Activated CD4-positive, alpha-beta T cell treated with anti-CD3 and anti-CD28 coated beads for 36 hours (primary cell): ENCODE measurements at regions of chr2 and their contacts with region 1.

Region 1: GRCh38 chr2:88307817-88308216 is 137.7 kb downstream of the THNSL2 start:
- DNase-seq: peak; percentile 38
- ATAC-seq: no peak
- H3K4me3 Mint-ChIP-seq: no peak overlapping the region
- H3K27ac Mint-ChIP-seq: no peak overlapping the region
- H3K4me1 Mint-ChIP-seq: no peaks in the 10 kb centered on the region
- H3K27me3 Mint-ChIP-seq: peaks cover 14% of the 10 kb centered on the region

Region 2: DNA sequence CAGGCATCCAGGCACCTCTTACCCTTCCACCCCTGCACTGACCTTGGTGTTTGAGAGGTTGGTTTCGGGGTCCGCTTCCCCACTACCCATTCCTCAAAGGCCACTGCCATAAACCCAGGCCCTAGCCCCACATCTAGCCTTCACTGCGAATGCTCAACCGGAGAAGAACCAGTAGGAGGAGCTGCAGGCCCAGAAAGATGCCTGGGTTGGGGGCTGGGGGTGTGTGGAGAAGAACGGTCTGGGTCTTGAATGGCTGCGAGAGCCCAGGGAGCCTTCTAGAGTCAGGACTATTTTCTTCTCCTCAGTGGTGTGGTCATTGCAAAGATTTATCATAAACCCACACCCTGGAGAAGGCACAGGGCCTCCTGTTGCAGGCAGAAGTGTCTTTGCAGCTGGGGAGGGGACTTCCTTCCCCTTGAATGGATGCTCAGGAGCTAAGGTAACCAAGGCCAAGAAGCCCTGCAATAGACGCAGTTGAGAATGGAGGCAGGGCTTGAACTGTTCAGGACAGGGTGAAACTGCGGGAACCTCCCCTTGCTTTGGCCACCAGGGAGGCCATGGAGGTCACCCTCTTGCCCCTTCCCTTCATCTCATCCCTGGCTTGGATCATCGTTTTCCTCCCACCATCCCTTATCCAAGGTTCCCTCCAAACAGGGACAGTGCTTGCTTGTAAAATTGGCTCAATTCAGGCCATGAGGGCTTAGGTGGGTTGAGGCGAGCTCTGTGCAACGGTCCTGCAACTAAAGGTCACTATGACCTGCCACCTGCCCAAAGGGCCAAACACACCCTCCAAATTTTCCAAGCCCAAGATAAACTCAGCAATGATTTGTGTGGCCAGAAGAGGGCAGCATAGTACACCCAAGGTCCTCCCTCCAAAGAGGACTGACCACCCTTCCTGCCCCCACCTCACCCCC is 116.8 kb before region 1 on chr2:
- CTCF ChIA-PET with region 1: no interaction called
- POLR2A ChIA-PET with region 1: no interaction called
- intact Hi-C with region 1: loop called in 1 of 2 experiments (anchors 2 kb)
- DNase-seq: peak; percentile 48
- ATAC-seq: no peak
- H3K4me3 Mint-ChIP-seq: no peak overlapping the region
- H3K27ac Mint-ChIP-seq: no peak overlapping the region
- H3K4me1 Mint-ChIP-seq: no peaks in the 10 kb centered on the region
- H3K27me3 Mint-ChIP-seq: peaks cover 22% of the 10 kb centered on the region

Region 3: DNA sequence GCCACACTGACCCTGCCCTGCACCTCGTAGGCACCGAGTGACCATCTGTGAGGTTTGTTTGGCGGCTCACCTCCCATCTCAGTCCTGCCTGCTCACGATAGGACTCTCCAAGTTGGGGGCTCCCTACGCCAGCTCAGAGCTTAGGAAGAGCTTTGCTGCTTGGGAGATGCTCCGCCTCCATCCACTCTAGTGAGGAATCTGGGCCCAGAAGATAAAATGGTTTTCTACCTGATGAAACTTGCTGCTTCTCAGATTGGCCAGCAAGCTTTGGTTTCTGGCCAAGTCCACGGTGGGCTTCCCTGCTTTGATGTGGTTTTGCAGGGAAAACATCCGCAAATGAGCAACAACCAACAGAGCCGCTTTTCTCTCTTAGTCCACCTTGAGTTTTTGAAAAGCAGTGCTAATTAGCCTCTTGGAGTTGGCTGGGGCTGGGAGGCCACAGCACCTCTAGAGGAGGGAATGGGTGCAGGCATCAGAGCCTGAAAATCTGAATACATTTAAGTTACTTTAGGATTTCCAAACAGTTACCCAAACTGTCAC is 95.5 kb before region 1 on chr2:
- CTCF ChIA-PET with region 1: no interaction called
- POLR2A ChIA-PET with region 1: no interaction called
- intact Hi-C with region 1: no loop called
- DNase-seq: no peak
- ATAC-seq: no peak
- H3K4me3 Mint-ChIP-seq: no peak overlapping the region
- H3K27ac Mint-ChIP-seq: no peak overlapping the region
- H3K4me1 Mint-ChIP-seq: no peaks in the 10 kb centered on the region
- H3K27me3 Mint-ChIP-seq: peaks cover 18% of the 10 kb centered on the region

Region 4: DNA sequence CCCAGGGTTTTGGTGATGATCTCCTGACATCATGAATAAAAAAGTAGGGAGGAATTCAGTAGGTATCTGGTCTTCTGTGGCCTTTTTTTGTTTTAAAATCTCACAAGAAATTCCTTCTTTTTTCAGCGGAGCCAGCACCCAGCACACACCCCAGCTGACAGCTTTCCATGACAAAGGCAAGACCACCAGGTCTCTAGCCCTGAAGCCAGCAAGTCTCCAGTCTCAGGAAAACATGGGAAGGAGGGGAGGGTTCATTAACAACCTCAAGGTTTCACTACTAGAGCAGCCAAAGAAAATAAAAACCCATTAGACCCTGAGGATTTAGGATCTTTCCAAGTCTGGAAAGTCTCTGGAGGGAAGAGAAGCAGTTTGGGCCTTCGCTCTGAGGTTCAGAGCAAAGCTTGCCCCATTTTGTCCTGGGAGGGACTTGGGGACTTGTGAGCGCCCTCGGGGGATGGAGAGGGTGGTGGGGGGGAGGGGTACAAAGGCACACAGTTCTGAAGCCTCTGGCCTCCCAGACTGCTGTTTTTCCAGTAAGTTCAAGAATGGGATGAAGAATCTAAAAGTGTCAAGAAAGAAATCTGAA is 135.6 kb after region 1 on chr2:
- CTCF ChIA-PET with region 1: no interaction called
- POLR2A ChIA-PET with region 1: no interaction called
- intact Hi-C with region 1: no loop called
- DNase-seq: no peak
- ATAC-seq: no peak
- H3K4me3 Mint-ChIP-seq: no peak overlapping the region
- H3K27ac Mint-ChIP-seq: no peak overlapping the region
- H3K4me1 Mint-ChIP-seq: no peaks in the 10 kb centered on the region
- H3K27me3 Mint-ChIP-seq: peaks cover 38% of the 10 kb centered on the region